Activated T-helper 1 cell treated with anti-CD3 and anti-CD28 coated beads, Interleukin-12 subunit alpha, Interleukin-12 subunit beta, Interleukin-2, Interleukin-4 antibody, amounts not matched to agents 30 ng/mL and 10 ng/mL and 1 ng/mL, durations not matched to agents 14 hours and 24 hours and 36 hours (primary cell): ENCODE measurements at regions of chr6 and their contacts with region 1.

Region 1: GRCh38 chr6:21593412-21593926 is at the start of gene SOX4:
- DNase-seq: peak; percentile 51
- H3K4me3 Mint-ChIP-seq: peak within 1 kb of the TSS; percentile 87
- H3K27ac Mint-ChIP-seq: peak within 1 kb of the TSS; percentile 89
- H3K4me1 Mint-ChIP-seq: peaks cover 29% of the 10 kb centered on the region
- H3K27me3 Mint-ChIP-seq: peaks cover 46% of the 10 kb centered on the region
- total RNA-seq, gene SOX4: 1.2 and 1.5 TPM in 2 replicates

Region 2: GRCh38 chr6:19836799-19837510 is 1756.5 kb before region 1 on chr6 and contains the start of gene ID4:
- intact Hi-C with region 1: loop called (anchors 5 kb)
- DNase-seq: no peak
- H3K4me3 Mint-ChIP-seq: no peak within 1 kb of the TSS
- H3K27ac Mint-ChIP-seq: no peak within 1 kb of the TSS
- H3K4me1 Mint-ChIP-seq: no peaks in the 10 kb centered on the region
- H3K27me3 Mint-ChIP-seq: peaks cover 45% of the 10 kb centered on the region
- total RNA-seq, gene ID4: not detected in 2 replicates

Region 3: GRCh38 chr6:20401205-20402091 is 1192.0 kb before region 1 on chr6 and contains the start of gene E2F3:
- intact Hi-C with region 1: loop called (anchors 2 kb)
- DNase-seq: peak; percentile 99
- H3K4me3 Mint-ChIP-seq: peak within 1 kb of the TSS; percentile 99
- H3K27ac Mint-ChIP-seq: peak within 1 kb of the TSS; percentile 97
- H3K4me1 Mint-ChIP-seq: peaks cover 42% of the 10 kb centered on the region
- H3K27me3 Mint-ChIP-seq: peaks cover 2% of the 10 kb centered on the region
- total RNA-seq, gene E2F3: 30.3 and 30.5 TPM in 2 replicates

Region 4: DNA sequence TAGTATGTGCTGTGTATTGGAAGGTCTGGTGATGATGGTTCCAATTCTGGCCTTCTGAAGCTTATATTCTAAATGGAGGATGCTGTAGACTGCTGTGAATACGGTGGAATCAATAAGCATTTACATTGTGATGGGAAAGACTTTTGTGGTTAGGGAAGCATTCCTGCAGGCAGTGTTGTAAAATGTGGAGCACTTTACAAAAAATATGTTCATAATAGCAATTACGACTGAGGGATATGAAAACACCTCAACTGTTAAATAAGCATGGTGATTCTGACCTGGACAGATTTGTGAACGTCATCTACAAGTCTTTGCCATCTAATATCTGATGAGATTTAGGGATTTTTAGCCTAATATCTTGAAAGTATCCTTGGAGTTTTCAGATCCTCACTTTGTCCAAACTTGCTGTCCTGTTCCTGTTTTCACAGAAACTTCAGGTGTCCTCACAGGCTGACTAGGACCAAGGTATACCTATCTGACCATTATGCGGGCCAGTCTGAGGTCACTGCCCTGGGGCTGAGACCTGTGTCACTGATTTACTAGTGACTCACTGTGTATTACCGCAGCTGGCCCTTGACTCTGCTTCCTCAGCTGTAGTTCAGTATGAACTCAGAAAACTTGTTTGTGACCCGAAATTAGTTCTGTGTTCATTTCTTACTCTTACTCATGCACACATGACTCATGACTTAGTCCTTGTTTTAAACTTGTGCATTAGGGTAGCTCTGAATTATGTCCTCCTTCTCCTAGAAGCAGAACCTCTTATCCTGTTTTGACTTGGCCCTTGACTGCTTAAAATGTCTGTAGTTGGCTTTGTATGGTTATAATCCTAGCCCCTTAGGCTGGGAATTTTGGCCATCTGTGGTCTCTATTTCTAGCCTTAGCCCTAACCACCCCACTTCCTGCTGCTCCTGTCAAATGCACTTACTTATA is 716.2 kb before region 1 on chr6:
- intact Hi-C with region 1: loop called (anchors 1 kb)
- DNase-seq: peak; percentile 2
- H3K4me3 Mint-ChIP-seq: no peak overlapping the region
- H3K27ac Mint-ChIP-seq: peak overlapping the region; percentile 79
- H3K4me1 Mint-ChIP-seq: peaks cover 15% of the 10 kb centered on the region
- H3K27me3 Mint-ChIP-seq: no peaks in the 10 kb centered on the region

Region 5: GRCh38 chr6:21664314-21665109 is 71.0 kb after region 1 on chr6:
- intact Hi-C with region 1: loop called (anchors 2 kb)
- DNase-seq: no peak
- H3K4me3 Mint-ChIP-seq: peak overlapping the region; percentile 51
- H3K27ac Mint-ChIP-seq: no peak overlapping the region
- H3K4me1 Mint-ChIP-seq: peaks cover 22% of the 10 kb centered on the region
- H3K27me3 Mint-ChIP-seq: peaks cover 69% of the 10 kb centered on the region

Region 6: DNA sequence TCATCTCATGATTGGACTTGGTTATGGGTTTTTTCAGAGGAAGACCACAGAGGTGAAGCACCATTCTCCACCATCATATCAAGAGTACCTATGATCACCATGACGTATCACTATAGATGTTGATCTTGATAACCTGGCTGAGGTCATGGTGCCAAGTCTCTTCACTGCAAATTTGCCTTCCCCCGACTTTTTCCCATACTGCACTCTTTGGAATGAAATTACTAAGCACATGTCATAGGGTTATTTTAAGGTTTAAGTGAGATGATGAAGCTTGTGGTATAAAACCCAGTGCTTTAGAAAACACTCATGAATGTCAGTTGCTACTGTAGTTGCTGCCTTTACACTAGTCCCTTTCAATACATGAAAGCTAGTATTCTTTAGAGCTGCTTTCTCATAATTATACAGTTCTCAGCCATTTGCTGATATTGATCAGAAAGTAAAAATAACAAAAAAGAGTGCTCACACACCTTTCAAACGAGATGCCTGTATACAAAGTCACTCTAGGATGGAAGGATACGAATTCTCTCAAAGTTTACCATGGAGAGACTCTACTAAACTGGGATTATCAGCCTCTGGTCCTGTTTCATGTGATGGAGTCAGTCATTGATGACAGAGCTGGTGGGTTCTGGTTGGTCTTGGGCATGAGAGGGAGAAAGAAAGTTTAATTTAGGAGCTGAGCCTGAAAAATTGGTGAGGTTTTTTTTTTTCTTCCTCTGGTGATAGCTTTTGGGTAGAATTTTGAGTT is 475.3 kb after region 1 on chr6:
- intact Hi-C with region 1: loop called (anchors 2 kb)
- DNase-seq: no peak
- H3K4me3 Mint-ChIP-seq: no peak overlapping the region
- H3K27ac Mint-ChIP-seq: peak overlapping the region; percentile 6
- H3K4me1 Mint-ChIP-seq: peaks cover 19% of the 10 kb centered on the region
- H3K27me3 Mint-ChIP-seq: peaks cover 2% of the 10 kb centered on the region